ENCODE measurements at regions of chr17 and their contacts with region 1.

Region 1: GRCh38 chr17:74203439-74204240 is at the start of gene RPL38:
- DNase-seq: peak; percentile 97
- H3K4me3 ChIP-seq: peak within 1 kb of the TSS; percentile 51 to 83 (median 75)
- H3K27ac ChIP-seq: peak within 1 kb of the TSS; percentile 84 to 88 (median 86)
- H3K4me1 ChIP-seq: peaks cover 14 to 50% (median 39%) of the 10 kb centered on the region in 4 donors
- H3K27me3 ChIP-seq: peaks cover 19% of the 10 kb centered on the region
- CTCF ChIP-seq: peak; percentile 87 to 98 (median 95)
- EP300 ChIP-seq: no peak
- POLR2A ChIP-seq: peak; percentile 93
- total RNA-seq, gene RPL38: 65.1 to 310 (median 203) TPM

Region 2: GRCh38 chr17:74296548-74296936 is 92.9 kb after region 1 on chr17:
- in situ Hi-C with region 1: no loop called
- intact Hi-C with region 1: loop called (anchors 10 kb)
- DNase-seq: peak; percentile 42
- H3K4me3 ChIP-seq: no peak overlapping the region
- H3K27ac ChIP-seq: no peak overlapping the region
- H3K4me1 ChIP-seq: peaks cover 0 to 6% (median 0%) of the 10 kb centered on the region in 4 donors
- H3K27me3 ChIP-seq: peaks cover 17% of the 10 kb centered on the region
- CTCF ChIP-seq: peak; percentile 32 to 49 (median 34)
- EP300 ChIP-seq: no peak
- POLR2A ChIP-seq: no peak

Region 3: GRCh38 chr17:74307984-74308773 is 104.5 kb after region 1 on chr17:
- in situ Hi-C with region 1: no loop called
- intact Hi-C with region 1: no loop called
- DNase-seq: no peak
- H3K4me3 ChIP-seq: no peak overlapping the region
- H3K27ac ChIP-seq: no peak overlapping the region
- H3K4me1 ChIP-seq: no peaks in the 10 kb centered on the region
- H3K27me3 ChIP-seq: peaks cover 12% of the 10 kb centered on the region
- CTCF ChIP-seq: no peak
- EP300 ChIP-seq: no peak
- POLR2A ChIP-seq: no peak

Region 4: DNA sequence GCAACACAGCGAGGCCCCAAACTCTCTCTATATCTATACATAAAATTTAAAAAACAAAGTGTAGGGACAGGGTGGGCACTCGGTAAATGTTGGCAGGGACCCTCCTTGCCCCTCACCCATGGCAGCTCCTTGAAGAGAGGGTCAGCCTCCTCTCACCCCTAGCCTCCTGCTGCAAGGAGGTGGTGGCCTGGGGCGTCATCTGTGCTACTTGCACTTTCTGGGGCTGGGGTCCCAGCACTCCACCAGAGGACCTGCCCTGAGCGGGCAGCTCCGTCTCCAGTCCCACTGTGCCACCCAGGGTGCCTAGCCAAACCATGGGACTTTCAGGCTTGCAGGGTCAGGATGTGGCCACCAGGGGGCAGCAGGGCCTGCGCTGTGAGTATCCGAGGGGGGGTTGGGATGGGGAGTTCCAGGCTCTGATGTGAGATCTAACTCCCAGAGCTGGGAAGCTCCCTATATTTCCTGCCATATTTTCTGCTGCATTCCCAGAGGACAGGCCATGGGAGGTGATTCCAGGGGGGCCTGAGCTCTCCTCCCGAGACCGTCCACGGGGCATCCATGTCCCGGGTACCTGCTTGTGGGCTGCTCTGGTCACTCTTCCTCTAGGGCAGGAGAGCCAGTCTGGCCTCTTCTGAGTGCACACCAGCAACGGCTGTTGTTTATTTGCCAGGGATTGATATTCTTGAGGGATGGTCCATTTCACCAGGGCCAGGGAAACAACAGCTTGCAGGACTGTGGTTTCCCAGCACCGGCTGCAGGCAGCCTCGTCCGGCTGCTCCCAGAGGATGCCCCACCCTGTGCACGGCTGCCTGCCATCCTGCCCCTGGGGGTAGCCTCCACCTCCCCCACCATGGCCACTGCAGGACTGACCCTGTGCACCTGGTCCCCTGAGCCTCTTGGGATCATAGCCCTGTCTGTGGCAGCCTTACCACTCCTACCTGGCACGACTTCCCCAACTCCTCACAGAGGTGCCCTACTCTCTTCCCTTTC is 164.7 kb after region 1 on chr17:
- in situ Hi-C with region 1: loop called in 2 of 4 experiments (anchors 25 kb)
- intact Hi-C with region 1: loop called (anchors 10 kb)
- DNase-seq: peak; percentile 79
- H3K4me3 ChIP-seq: no peak overlapping the region
- H3K27ac ChIP-seq: no peak overlapping the region
- H3K4me1 ChIP-seq: peaks cover 3 to 14% (median 11%) of the 10 kb centered on the region in 4 donors
- H3K27me3 ChIP-seq: no peaks in the 10 kb centered on the region
- CTCF ChIP-seq: peak; percentile 92 to 98 (median 95)
- EP300 ChIP-seq: no peak
- POLR2A ChIP-seq: no peak

Region 5: GRCh38 chr17:74457146-74457819 is 253.6 kb after region 1 on chr17:
- in situ Hi-C with region 1: loop called in 1 of 4 experiments (anchors 10 kb)
- intact Hi-C with region 1: no loop called
- DNase-seq: peak; percentile 80
- H3K4me3 ChIP-seq: no peak overlapping the region
- H3K27ac ChIP-seq: no peak overlapping the region
- H3K4me1 ChIP-seq: peaks cover 15 to 35% (median 29%) of the 10 kb centered on the region in 4 donors
- H3K27me3 ChIP-seq: no peaks in the 10 kb centered on the region
- CTCF ChIP-seq: peak; percentile 95 to 99 (median 98)
- EP300 ChIP-seq: no peak
- POLR2A ChIP-seq: no peak

Measured in transverse colon (tissue), 4 donors.